Colonic mucosa (tissue), 4 donors: ENCODE measurements at regions of chr16 and their contacts with region 1.

Region 1: GRCh38 chr16:361872-362701 is 8.3 kb downstream of the MRPL28 start:
- DNase-seq: peak; percentile 84
- H3K4me3 ChIP-seq: no peak overlapping the region
- H3K27ac ChIP-seq: no peak overlapping the region
- H3K4me1 ChIP-seq: no peaks in the 10 kb centered on the region
- H3K27me3 ChIP-seq: no peaks in the 10 kb centered on the region
- CTCF ChIP-seq: peak; percentile 69

Region 2: DNA sequence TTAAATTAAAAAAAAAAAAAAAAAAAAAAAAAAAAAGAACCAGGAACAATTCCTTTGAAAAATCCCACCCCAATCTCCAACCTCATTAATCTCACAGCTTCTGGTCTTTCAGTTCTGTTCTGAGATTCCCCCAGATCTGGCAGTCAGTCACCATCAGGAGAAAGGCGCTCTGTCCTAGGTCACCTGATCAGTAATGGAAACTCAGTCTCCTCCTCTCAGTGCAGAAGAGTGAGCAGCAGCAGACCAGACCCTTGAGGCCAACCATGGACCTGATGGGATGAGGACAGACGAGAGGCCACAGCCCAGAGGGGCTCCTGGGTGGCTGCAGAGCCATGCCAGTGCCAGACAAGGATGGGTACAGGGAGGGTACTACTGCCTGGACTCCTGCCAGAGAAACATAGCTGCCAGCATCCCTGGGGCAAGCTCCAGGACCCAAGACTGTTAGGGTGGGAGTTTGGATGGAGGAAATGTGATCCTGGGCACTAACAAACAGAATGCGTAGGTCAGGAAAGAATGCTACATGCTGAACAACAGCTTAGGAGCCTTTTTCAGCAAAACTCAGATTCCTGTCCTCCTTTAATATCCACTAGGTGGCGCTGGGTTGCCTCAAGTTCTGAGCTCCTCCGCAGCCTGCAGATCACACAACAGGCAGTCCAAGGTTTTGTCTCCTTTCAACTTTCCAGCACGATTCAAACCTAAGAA is 255.3 kb before region 1 on chr16:
- intact Hi-C with region 1: loop called (anchors 5 kb)
- DNase-seq: peak; percentile 58
- H3K4me3 ChIP-seq: no peak overlapping the region
- H3K27ac ChIP-seq: no peak overlapping the region
- H3K4me1 ChIP-seq: no peaks in the 10 kb centered on the region
- H3K27me3 ChIP-seq: no peaks in the 10 kb centered on the region
- CTCF ChIP-seq: peak; percentile 58

Region 3: GRCh38 chr16:228818-229730 is 133.0 kb before region 1 on chr16 and contains the start of gene LUC7L:
- intact Hi-C with region 1: loop called (anchors 10 kb)
- DNase-seq: peak; percentile 91
- H3K4me3 ChIP-seq: peak within 1 kb of the TSS; percentile 75
- H3K27ac ChIP-seq: peak within 1 kb of the TSS; percentile 95
- H3K4me1 ChIP-seq: peaks cover 9% of the 10 kb centered on the region
- H3K27me3 ChIP-seq: no peaks in the 10 kb centered on the region
- CTCF ChIP-seq: no peak
- total RNA-seq, gene LUC7L: 37.1 to 55.4 TPM

Region 4: GRCh38 chr16:318628-319027 is 43.5 kb before region 1 on chr16:
- intact Hi-C with region 1: no loop called
- DNase-seq: no peak
- H3K4me3 ChIP-seq: no peak overlapping the region
- H3K27ac ChIP-seq: no peak overlapping the region
- H3K4me1 ChIP-seq: no peaks in the 10 kb centered on the region
- H3K27me3 ChIP-seq: no peaks in the 10 kb centered on the region
- CTCF ChIP-seq: no peak

Region 5: GRCh38 chr16:471353-472198 is 109.5 kb after region 1 on chr16:
- intact Hi-C with region 1: no loop called
- DNase-seq: no peak
- H3K4me3 ChIP-seq: no peak overlapping the region
- H3K27ac ChIP-seq: no peak overlapping the region
- H3K4me1 ChIP-seq: no peaks in the 10 kb centered on the region
- H3K27me3 ChIP-seq: no peaks in the 10 kb centered on the region
- CTCF ChIP-seq: no peak